Ascending aorta (tissue), 2 donors: ENCODE measurements at regions of chr5 and their contacts with region 1.

Region 1: DNA sequence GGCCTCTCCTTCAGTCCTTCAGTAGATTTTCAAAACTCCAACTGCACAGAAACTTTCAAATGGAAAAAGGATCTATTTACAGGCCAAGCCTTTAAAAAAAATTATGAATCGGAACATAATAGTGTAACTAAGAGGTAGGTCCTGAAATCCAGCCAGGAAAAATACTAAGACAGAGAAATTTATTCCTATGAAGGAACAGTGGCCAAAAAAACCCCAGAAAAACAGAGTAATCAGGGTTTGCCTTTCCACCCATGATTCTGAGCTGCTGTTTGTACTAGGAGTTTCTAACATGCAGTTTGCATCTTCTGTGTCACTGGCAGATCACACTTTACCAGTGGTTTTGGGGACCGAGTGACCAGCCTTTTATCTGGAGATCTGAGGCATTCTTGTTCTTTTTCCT is 93.1 kb upstream of the TMED7 start:
- DNase-seq: no peak
- H3K4me3 ChIP-seq: no peak overlapping the region
- H3K27ac ChIP-seq: peak overlapping the region; percentile 32 to 67
- H3K4me1 ChIP-seq: peaks cover 3 to 33% of the 10 kb centered on the region in 2 donors
- H3K27me3 ChIP-seq: no peaks in the 10 kb centered on the region
- CTCF ChIP-seq: no peak

Region 2: GRCh38 chr5:115736004-115736689 is 17.2 kb after region 1 on chr5:
- intact Hi-C with region 1: loop called (anchors 2 kb)
- DNase-seq: no peak
- H3K4me3 ChIP-seq: no peak overlapping the region
- H3K27ac ChIP-seq: peak overlapping the region; percentile 32 to 42
- H3K4me1 ChIP-seq: peaks cover 0 to 3% of the 10 kb centered on the region in 2 donors
- H3K27me3 ChIP-seq: no peaks in the 10 kb centered on the region
- CTCF ChIP-seq: no peak

Region 3: GRCh38 chr5:115816226-115817081 is 97.5 kb after region 1 on chr5 and contains the start of gene CDO1:
- intact Hi-C with region 1: loop called (anchors 5 kb)
- DNase-seq: peak in 1 of 2 donors; percentile 78
- H3K4me3 ChIP-seq: peak within 1 kb of the TSS; percentile 56 to 89
- H3K27ac ChIP-seq: peak within 1 kb of the TSS; percentile 85 to 88
- H3K4me1 ChIP-seq: peaks cover 0 to 3% of the 10 kb centered on the region in 2 donors
- H3K27me3 ChIP-seq: no peaks in the 10 kb centered on the region
- CTCF ChIP-seq: no peak
- total RNA-seq, gene CDO1: 36.0 TPM